ENCODE measurements at regions of chr3 and their contacts with region 1.

Region 1: DNA sequence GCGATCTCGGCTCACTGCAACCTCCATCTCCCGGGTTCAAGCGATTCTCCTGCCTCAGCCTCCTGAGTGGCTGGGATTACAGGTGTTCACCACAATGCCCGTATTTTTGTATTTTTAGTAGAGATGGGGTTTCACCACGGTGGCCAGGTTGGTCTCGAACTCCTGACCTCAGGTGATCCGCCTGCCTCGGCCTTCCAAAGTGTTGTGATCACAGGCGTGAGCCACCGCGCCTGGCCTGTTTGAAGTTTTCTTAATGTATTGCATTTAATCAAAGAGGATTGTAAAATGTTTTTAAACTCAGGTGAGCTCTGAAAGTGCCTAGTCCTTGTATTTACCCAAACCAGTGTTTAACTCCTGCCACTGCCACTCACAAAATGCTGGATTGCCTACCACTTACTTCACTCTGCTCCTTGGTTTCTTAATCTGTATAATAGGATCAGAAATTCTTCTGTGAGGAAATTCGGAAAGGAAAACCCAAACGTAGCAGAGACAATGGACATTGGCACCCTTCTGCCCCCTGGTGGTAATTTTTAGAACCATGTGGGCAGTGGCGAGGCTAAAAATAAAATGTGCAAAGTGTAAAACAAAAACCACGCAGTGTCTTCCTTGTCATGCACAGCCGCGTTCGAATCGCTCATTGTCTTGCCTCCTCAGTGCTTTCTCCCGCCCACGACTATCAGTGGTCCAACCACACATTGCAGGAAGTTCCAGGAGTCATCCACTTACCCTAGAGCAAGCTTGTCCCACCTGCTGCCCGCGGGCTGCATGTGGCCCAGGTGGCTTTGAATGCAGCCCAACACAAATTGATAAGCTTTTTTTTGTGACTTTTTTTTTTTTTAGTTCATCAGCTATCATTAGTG is 27.3 kb downstream of the CEP19 start:
- DNase-seq: peak; percentile 64 to 70
- H3K4me3 ChIP-seq: no peak overlapping the region
- H3K27ac ChIP-seq: no peak overlapping the region
- H3K4me1 ChIP-seq: peaks cover 0 to 9% (median 0%) of the 10 kb centered on the region in 4 donors
- H3K27me3 ChIP-seq: no peaks in the 10 kb centered on the region
- CTCF ChIP-seq: peak; percentile 82 to 86

Region 2: GRCh38 chr3:196604548-196604947 is 80.2 kb before region 1 on chr3:
- intact Hi-C with region 1: loop called (anchors 5 kb)
- DNase-seq: no peak
- H3K4me3 ChIP-seq: no peak overlapping the region
- H3K27ac ChIP-seq: no peak overlapping the region
- H3K4me1 ChIP-seq: no peaks in the 10 kb centered on the region
- H3K27me3 ChIP-seq: peaks cover 0 to 4% of the 10 kb centered on the region in 2 donors
- CTCF ChIP-seq: no peak

Region 3: DNA sequence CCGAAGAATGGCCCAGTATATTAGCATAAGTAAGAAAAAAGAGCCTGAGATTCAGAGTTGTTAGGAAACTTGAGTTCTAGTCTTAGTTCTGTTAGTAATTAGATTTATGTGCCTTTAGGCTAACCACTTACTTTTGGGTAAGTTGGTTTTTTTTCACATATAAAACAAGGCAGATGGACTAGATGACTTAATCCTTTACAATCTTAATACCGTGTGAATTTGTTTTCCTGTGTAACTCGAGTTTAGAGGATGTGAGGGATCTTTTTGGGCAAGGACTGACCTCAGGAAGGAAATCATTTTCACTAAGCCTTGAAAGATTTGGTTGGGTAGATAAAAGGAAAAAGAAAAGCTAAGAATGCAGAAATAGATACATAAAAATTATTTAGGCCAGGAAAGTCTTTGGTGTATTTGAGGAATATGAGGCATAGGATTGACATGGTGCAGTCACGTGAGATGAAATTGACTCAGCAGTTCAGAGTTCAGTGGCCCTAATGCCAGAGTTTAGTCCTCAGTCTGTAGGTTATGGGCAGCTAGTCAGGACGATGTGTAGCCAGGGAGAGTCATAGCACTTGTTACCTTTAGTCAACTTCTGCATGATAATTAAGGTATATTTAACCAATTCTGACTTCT is 89.5 kb after region 1 on chr3:
- intact Hi-C with region 1: no loop called
- DNase-seq: no peak
- H3K4me3 ChIP-seq: no peak overlapping the region
- H3K27ac ChIP-seq: no peak overlapping the region
- H3K4me1 ChIP-seq: peaks cover 0 to 24% (median 6%) of the 10 kb centered on the region in 4 donors
- H3K27me3 ChIP-seq: no peaks in the 10 kb centered on the region
- CTCF ChIP-seq: no peak

Region 4: DNA sequence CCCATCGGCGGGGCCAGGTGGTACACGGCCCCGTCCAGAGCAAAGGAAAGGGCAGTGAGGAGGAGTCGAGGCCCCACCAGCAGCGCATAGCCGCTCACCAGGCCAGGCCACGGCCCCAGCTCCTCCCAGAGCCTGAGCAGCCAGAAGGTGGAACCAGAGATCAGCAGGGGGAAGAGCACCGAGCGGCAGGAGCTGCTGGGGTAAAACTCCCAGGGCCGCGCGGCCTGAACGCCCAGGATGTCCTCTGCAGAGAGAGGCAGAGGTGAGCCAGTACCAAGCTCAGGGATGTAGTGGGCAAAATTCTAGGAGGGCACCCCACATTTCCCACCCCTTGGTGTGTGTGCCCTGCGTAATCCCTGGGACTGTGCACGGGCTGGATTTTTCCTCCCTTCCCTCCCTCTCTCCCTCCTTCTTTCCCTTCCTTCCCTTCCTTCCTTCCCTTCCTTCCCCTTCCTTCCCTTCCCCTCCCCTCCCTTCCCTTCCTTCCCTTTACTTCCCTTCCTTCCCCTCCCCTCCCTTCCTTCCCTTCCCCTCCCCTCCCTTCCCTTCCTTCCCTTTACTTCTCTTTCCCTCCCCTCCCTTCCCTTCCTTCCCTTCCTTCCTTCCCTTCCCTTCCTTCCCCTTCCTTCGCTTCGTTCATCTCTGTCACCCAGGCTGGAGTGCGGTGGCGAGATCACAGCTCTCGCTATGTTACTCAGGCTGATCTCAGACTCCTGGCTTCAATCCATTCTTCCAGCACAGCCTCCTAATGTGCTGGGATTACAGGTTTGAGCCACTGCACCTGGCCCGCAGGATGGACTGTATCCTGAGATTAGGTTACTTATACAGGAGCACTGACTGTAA is 263.9 kb after region 1 on chr3:
- intact Hi-C with region 1: no loop called
- DNase-seq: no peak
- H3K4me3 ChIP-seq: no peak overlapping the region
- H3K27ac ChIP-seq: no peak overlapping the region
- H3K4me1 ChIP-seq: peaks cover 0 to 10% (median 5%) of the 10 kb centered on the region in 4 donors
- H3K27me3 ChIP-seq: no peaks in the 10 kb centered on the region
- CTCF ChIP-seq: no peak

Region 5: DNA sequence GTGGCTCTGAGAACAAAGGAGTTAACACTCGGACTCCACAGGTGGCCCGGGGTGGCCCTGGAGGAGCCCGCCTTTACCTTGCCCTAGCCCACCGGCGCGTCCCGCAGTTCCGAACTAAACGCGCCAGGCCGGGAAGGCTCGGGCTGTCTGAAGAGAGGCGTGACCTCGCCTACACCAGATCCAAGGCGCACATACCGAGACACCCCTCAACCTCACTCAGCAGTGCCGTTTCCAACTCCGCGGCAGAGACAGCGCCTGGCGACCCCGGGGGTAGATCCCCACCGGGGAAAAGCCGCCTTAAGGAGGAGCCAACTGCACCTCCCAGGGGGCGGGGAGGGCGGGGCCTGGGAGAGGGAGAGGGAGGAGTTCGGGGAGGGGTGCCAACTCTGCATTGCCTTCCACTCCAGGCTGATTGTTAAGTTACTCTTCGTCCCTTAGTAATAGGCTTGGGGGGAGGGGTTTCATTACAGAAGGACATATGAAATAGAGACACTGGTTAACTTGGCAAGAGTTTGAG is 613.6 kb after region 1 on chr3 and contains the start of gene DLG1:
- intact Hi-C with region 1: no loop called
- DNase-seq: peak; percentile 82 to 92
- H3K4me3 ChIP-seq: peak within 1 kb of the TSS; percentile 84 to 97
- H3K27ac ChIP-seq: peak within 1 kb of the TSS; percentile 88 to 92
- H3K4me1 ChIP-seq: peaks cover 0 to 27% (median 7%) of the 10 kb centered on the region in 4 donors
- H3K27me3 ChIP-seq: no peaks in the 10 kb centered on the region
- CTCF ChIP-seq: no peak